ENCODE measurements at regions of chr12 and their contacts with region 1.

Region 1: DNA sequence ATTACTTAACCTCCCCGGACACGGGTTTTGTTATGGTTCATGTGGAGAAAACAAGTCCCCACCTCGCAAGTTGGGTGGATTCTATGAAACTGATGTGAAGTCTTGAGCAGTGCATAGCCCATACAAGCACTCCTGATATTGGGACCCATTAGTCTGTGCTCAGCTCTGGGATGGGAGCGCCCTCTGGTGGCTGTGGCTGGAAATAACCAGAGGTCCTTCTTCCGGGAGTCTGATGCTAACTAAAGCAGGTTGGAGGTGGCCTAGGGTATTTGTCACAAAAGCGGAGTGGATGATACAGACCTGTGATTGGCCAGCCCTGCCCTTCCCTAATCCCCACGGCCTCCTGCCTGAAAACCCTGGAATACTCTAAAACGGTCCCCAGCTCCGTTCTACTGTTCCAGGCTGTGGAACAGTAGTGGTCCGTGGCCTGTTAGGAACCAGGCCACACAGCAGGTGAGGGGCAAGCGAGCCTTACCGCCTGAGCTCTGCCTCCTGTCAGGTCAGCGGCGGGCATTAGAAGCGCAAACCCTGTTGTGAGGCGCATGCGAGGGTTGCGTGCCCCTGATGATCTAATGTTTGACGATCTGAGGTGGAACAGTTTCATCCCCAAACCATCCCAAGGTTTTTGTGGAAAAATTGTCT is 6.4 kb downstream of the SLC48A1 start:
- DNase-seq: peak; percentile 70
- H3K4me3 ChIP-seq: no peak overlapping the region
- H3K27ac ChIP-seq: no peak overlapping the region
- H3K4me1 ChIP-seq: peaks cover 59% of the 10 kb centered on the region
- H3K27me3 ChIP-seq: no peaks in the 10 kb centered on the region
- CTCF ChIP-seq: peak; percentile 88 to 97

Region 2: DNA sequence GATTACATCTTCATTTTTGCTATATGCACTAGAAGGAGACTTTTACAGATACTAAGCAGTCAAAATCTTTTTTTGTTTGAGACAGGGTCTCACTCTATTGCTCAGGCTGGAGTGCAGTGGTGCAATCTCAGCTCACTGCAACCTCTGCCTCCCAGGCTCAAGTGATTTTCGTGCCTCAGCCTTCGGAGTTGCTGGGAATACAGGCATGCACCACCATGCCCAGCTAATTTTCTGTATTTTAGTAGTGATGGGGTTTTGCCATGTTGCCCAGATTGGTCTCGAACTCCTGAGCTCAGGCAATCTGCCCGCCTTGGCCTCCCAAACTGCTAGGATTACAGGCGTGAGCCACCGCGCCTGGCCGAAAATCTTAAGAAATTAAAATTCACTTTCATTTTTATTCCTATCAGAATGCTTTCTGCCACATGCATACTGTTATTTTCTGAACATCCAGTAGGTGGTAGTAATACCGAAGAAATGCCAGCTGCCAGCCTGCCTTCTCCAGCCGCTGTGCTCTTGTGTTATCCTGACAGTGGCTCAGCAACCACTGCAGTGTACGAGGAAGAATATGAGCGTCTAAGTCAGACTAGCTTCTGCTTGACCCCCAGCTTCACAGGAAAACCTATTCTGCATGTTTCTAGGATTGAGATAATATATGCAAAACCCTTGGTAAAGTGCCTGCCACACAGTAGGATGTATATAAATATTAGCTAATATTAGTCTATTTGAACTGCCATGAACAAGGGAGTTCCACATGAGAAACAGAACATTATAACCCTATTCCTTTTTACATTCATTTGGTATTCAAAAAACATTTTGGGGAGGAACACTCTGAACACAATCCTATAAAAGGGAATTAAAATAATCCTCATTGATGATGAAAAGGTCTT is 127.8 kb before region 1 on chr12:
- CTCF ChIA-PET with region 1: no interaction called
- dilution Hi-C with region 1: no loop called
- in situ Hi-C with region 1: no loop called
- intact Hi-C with region 1: loop called (anchors 2 kb)
- DNase-seq: peak; percentile 55
- H3K4me3 ChIP-seq: no peak overlapping the region
- H3K27ac ChIP-seq: no peak overlapping the region
- H3K4me1 ChIP-seq: no peaks in the 10 kb centered on the region
- H3K27me3 ChIP-seq: no peaks in the 10 kb centered on the region
- CTCF ChIP-seq: peak; percentile 63 to 66

Region 3: GRCh38 chr12:47721431-47721973 is 57.9 kb before region 1 on chr12:
- CTCF ChIA-PET with region 1: no interaction called
- dilution Hi-C with region 1: loop called (anchors 5 kb)
- in situ Hi-C with region 1: no loop called
- intact Hi-C with region 1: no loop called
- DNase-seq: no peak
- H3K4me3 ChIP-seq: no peak overlapping the region
- H3K27ac ChIP-seq: no peak overlapping the region
- H3K4me1 ChIP-seq: peaks cover 4% of the 10 kb centered on the region
- H3K27me3 ChIP-seq: no peaks in the 10 kb centered on the region
- CTCF ChIP-seq: no peak

Region 4: DNA sequence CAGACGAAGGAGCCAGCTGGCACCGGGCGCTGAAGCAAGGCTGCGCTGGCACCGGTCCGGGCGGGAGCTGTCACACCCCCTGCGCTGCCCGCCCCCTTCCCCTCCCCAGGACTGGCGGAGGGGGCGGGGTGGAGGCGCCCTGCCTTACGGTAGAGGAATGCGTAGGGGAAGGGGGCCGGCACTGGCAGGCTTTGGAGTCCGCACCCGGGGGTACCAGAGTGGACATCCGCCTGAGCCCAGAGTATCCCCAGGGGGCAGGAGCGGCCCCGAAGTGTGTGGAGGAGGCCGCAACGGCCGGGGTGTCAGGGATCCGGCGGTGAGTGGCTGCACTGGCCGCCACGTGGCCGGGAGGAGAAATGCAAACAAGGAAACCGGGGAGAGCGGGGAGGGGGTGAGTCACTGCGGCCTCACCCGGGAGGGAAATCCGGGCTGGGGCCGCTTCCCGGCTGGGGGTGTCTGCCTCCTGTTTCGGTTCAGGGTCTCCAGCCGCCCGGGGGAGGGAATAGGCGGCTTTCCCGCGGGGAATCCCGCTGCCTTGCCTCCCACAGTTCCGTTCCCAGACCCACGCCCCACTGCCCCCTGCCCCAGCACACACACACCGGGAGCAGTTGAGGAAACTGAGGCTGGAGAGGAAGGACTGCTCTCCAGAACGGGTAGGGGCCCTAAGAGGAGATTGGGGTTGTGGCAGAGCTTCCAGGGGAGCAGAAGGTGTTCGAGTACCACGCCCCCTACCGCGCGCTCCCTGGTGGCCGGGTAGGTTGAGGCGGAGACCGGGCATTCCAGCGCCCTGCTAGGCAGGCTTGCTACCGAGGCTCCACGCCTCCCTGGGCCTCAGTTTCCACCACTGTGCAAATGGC is 20.4 kb before region 1 on chr12 and contains the start of gene RAPGEF3:
- CTCF ChIA-PET with region 1: no interaction called
- dilution Hi-C with region 1: no loop called
- in situ Hi-C with region 1: no loop called
- intact Hi-C with region 1: loop called (anchors 2 kb)
- DNase-seq: peak; percentile 85
- H3K4me3 ChIP-seq: peak within 1 kb of the TSS; percentile 50 to 69 (median 54)
- H3K27ac ChIP-seq: peak within 1 kb of the TSS; percentile 67
- H3K4me1 ChIP-seq: peaks cover 57% of the 10 kb centered on the region
- H3K27me3 ChIP-seq: no peaks in the 10 kb centered on the region
- CTCF ChIP-seq: peak; percentile 33 to 65
- total RNA-seq, gene RAPGEF3: 9.7 to 41.0 TPM

Region 5: DNA sequence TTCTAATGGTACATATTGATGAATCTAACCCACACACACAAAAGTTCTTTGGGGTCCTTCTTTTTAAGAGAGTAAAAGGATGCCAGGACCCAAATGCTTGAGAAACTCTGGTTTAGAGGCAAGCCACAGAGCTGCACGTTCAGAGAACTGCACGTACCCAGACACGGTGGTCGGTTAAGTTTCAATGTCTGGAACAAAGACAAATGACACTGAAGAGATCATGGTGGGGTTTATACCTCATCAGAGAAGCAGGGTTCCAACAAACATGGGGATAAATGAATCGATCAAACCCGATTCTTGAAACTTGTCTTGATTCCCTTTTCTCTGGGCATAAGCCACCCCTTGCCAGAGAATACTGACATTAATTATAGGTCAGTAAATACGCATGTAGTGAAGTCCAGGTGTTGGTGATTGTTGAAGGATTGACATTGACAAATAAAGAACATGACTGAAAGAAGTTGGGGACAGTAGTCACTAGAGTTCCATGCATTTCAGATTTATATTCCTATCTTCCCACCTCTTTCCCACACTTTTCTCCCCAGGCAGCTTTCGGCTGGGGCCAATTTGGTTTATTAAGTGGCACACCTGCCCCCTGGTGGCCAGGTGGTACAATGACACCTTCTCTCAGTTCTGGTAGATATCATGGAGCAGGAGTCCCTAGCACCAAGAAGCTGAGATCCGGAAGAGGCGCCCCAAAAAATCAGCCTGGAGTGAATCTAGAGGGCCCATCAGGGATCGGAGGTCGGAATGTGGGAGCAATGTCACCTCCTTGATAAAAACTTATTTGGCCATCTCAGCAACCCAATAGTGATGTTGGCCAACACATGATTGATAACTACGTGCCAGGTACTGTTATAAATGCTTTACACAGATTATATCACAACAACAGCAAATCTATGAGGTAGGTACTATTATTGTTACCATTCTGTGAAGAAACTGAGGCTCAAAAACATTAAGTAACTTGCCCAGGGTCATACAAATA is 58.1 kb after region 1 on chr12:
- CTCF ChIA-PET with region 1: interaction called, 5 read pairs
- dilution Hi-C with region 1: no loop called
- in situ Hi-C with region 1: loop called in 1 of 2 experiments (anchors 5 kb)
- intact Hi-C with region 1: loop called (anchors 1 kb)
- DNase-seq: peak; percentile 62
- H3K4me3 ChIP-seq: no peak overlapping the region
- H3K27ac ChIP-seq: no peak overlapping the region
- H3K4me1 ChIP-seq: peaks cover 17% of the 10 kb centered on the region
- H3K27me3 ChIP-seq: no peaks in the 10 kb centered on the region
- CTCF ChIP-seq: peak; percentile 85 to 88

Region 6: GRCh38 chr12:48165094-48165981 is 385.9 kb after region 1 on chr12:
- CTCF ChIA-PET with region 1: no interaction called
- dilution Hi-C with region 1: no loop called
- in situ Hi-C with region 1: no loop called
- intact Hi-C with region 1: loop called (anchors 10 kb)
- DNase-seq: peak; percentile 27
- H3K4me3 ChIP-seq: no peak overlapping the region
- H3K27ac ChIP-seq: no peak overlapping the region
- H3K4me1 ChIP-seq: no peaks in the 10 kb centered on the region
- H3K27me3 ChIP-seq: no peaks in the 10 kb centered on the region
- CTCF ChIP-seq: peak; percentile 95 to 98

Region 7: GRCh38 chr12:48716168-48716492 is 936.7 kb after region 1 on chr12:
- CTCF ChIA-PET with region 1: no interaction called
- dilution Hi-C with region 1: no loop called
- in situ Hi-C with region 1: no loop called
- intact Hi-C with region 1: no loop called
- DNase-seq: no peak
- H3K4me3 ChIP-seq: peak overlapping the region; percentile 63 to 88 (median 84)
- H3K27ac ChIP-seq: peak overlapping the region; percentile 92
- H3K4me1 ChIP-seq: peaks cover 21% of the 10 kb centered on the region
- H3K27me3 ChIP-seq: no peaks in the 10 kb centered on the region
- CTCF ChIP-seq: no peak

Measured in mammary epithelial cell (primary cell).